Heart right ventricle (tissue), 16 donors: ENCODE measurements at regions of chr21 and their contacts with region 1.

Region 1: GRCh38 chr21:34614633-34615486 is at the start of gene RCAN1:
- DNase-seq: peak; percentile 87 to 92
- ATAC-seq: peak; percentile 97 to 99 (median 98)
- H3K4me3 ChIP-seq: peak within 1 kb of the TSS; percentile 40 to 87 (median 74)
- H3K27ac ChIP-seq: peak within 1 kb of the TSS; percentile 64 to 97 (median 91)
- H3K4me1 ChIP-seq: peaks cover 0 to 51% (median 31%) of the 10 kb centered on the region in 9 donors
- H3K27me3 ChIP-seq: no peaks in the 10 kb centered on the region
- CTCF ChIP-seq: peak in 1 of 9 donors; percentile 10
- total RNA-seq, gene RCAN1: 30.8 to 389 (median 62.2) TPM

Region 2: DNA sequence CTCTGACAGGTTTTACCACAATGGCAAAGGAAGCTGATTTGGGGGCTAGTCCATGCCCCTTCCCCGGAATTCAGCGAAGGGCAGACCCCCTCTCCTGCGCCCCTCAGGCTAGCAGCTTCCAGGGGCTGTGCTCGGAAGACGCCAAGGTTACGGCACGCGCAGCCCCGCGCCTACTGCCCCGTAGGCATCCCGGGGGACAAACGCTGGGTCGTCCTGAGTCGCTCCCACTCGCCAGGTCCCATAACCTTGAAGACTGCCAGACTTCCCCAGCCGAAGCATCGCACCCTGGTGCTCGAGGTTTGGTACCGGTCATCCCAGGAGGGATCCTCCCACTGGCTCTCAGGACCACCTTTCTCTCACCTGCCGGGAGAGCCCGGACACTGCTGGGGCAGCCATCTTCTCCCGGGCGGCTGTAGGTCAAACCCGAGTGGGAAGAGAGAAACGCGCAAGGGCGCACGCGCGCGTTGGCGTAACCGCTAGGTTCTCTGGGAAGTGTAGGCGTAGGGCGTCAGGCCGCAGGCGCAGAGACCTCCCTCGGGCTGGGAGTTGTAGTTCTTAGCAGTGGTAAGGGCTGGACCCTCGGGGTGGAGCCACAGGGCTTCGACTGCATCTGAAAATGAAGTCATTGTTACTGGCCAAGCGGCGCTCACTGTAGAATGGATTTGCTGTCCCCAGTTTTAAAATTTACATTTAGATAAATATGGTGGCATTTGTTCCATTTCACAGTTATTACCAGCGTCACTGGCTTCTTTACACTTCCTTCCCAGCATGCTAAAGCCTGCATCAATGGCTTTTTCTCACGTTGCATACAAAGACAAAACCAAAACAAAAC is 699.3 kb before region 1 on chr21 and contains the start of gene ATP5PO:
- intact Hi-C with region 1: loop called in 1 of 10 experiments (anchors 10 kb)
- DNase-seq: peak; percentile 98
- ATAC-seq: peak; percentile 99 to 100 (median 100)
- H3K4me3 ChIP-seq: peak within 1 kb of the TSS; percentile 57 to 98 (median 82)
- H3K27ac ChIP-seq: peak within 1 kb of the TSS; percentile 89 to 96 (median 94)
- H3K4me1 ChIP-seq: peaks cover 0 to 46% (median 30%) of the 10 kb centered on the region in 9 donors
- H3K27me3 ChIP-seq: no peaks in the 10 kb centered on the region
- CTCF ChIP-seq: no peak
- total RNA-seq, gene ATP5PO: 551 to 977 (median 851) TPM